ENCODE measurements at regions of chr2 and their contacts with region 1.

Region 1: DNA sequence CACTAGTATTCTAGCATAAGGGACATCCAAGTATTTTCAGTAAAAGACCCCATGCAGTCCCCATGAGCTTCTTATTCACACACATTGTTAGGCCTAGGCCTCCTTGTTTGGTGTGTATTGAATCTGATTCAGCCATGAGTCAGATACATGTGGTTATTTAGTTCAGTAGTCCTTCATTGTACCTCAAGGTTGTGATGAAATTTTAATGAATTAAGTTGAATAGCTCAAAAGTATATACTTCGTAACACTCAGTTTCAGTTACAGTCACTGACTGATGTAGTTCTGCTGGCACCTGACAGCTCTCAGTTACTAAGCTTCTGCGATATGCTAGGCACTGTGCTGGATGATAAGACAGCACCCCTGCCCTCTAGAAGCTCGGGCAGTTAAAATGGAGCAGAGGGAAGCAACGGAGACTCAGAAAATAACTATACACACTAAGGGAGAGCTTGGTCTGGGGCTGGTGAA is 86.4 kb downstream of the XRCC5 start:
- DNase-seq: no peak
- ATAC-seq: peak; percentile 49
- H3K4me3 ChIP-seq: no peak overlapping the region
- H3K27ac ChIP-seq: no peak overlapping the region
- H3K4me1 ChIP-seq: peaks cover 9% of the 10 kb centered on the region; the same call in 1 of the 2 replicates
- H3K27me3 ChIP-seq: no peaks in the 10 kb centered on the region
- CTCF ChIP-seq: no peak
- EP300 ChIP-seq: no peak
- POLR2A ChIP-seq: no peak
- RAD21 ChIP-seq: no peak

Region 2: GRCh38 chr2:216183462-216183861 is 12.1 kb before region 1 on chr2:
- CTCF ChIA-PET with region 1: interaction called, 6 read pairs
- POLR2A ChIA-PET with region 1: interaction called, 4 read pairs
- RAD21 ChIA-PET with region 1: interaction called, 5 read pairs
- SMC1A ChIA-PET with region 1: interaction called, 10 read pairs
- in situ Hi-C with region 1: no loop called
- intact Hi-C with region 1: no loop called
- DNase-seq: no peak
- ATAC-seq: peak; percentile 76
- H3K4me3 ChIP-seq: no peak overlapping the region
- H3K27ac ChIP-seq: peak overlapping the region; percentile 35; the same call in 1 of the 2 replicates
- H3K4me1 ChIP-seq: peaks cover 4% of the 10 kb centered on the region; the same call in 1 of the 2 replicates
- H3K27me3 ChIP-seq: no peaks in the 10 kb centered on the region
- CTCF ChIP-seq: no peak
- EP300 ChIP-seq: no peak
- POLR2A ChIP-seq: no peak
- RAD21 ChIP-seq: no peak

Region 3: GRCh38 chr2:216215658-216216390 is 20.2 kb after region 1 on chr2:
- CTCF ChIA-PET with region 1: interaction called, 4 read pairs
- POLR2A ChIA-PET with region 1: interaction called, 4 read pairs
- RAD21 ChIA-PET with region 1: no interaction called
- SMC1A ChIA-PET with region 1: interaction called, 14 read pairs
- in situ Hi-C with region 1: no loop called
- intact Hi-C with region 1: no loop called
- DNase-seq: no peak
- ATAC-seq: peak; percentile 60
- H3K4me3 ChIP-seq: no peak overlapping the region
- H3K27ac ChIP-seq: peak overlapping the region; percentile 24; the same call in 1 of the 2 replicates
- H3K4me1 ChIP-seq: peaks cover 26% of the 10 kb centered on the region
- H3K27me3 ChIP-seq: no peaks in the 10 kb centered on the region
- CTCF ChIP-seq: peak; percentile 26 to 46 (median 37); a peak in 4 of 6 replicates
- EP300 ChIP-seq: no peak
- POLR2A ChIP-seq: no peak
- RAD21 ChIP-seq: peak; percentile 31; the same call in 1 of the 2 replicates

Region 4: DNA sequence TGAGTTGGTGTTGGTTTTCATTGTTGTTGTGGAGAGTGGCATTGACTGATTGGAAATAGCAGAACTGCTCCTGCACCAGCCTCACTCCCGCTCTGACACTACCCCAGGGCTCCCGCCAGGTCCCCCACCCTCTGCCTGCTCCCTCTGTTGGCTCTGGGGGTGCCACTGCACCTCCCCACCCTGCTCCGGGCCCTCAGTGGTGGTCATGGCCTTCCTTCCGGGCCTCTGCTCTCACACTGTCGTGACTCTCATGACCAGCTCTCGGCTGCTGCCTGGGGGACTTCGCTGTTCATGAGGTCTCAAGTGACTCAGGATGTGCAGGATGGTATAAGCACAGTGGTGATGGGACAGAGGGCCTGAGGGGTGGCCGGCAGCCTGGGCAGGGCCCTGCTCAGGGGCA is 63.5 kb after region 1 on chr2:
- CTCF ChIA-PET with region 1: no interaction called
- POLR2A ChIA-PET with region 1: no interaction called
- RAD21 ChIA-PET with region 1: no interaction called
- SMC1A ChIA-PET with region 1: no interaction called
- in situ Hi-C with region 1: no loop called
- intact Hi-C with region 1: no loop called
- DNase-seq: no peak
- ATAC-seq: no peak
- H3K4me3 ChIP-seq: no peak overlapping the region
- H3K27ac ChIP-seq: no peak overlapping the region
- H3K4me1 ChIP-seq: no peaks in the 10 kb centered on the region
- H3K27me3 ChIP-seq: no peaks in the 10 kb centered on the region
- CTCF ChIP-seq: no peak
- EP300 ChIP-seq: no peak
- POLR2A ChIP-seq: no peak
- RAD21 ChIP-seq: no peak

Region 5: GRCh38 chr2:216491793-216492596 is 296.4 kb after region 1 on chr2:
- CTCF ChIA-PET with region 1: no interaction called
- POLR2A ChIA-PET with region 1: interaction called, 11 read pairs
- RAD21 ChIA-PET with region 1: no interaction called
- SMC1A ChIA-PET with region 1: interaction called, 3 read pairs
- in situ Hi-C with region 1: no loop called
- intact Hi-C with region 1: no loop called
- DNase-seq: peak; percentile 61
- ATAC-seq: peak; percentile 90
- H3K4me3 ChIP-seq: no peak overlapping the region
- H3K27ac ChIP-seq: peak overlapping the region; percentile 82
- H3K4me1 ChIP-seq: peaks cover 36% of the 10 kb centered on the region
- H3K27me3 ChIP-seq: no peaks in the 10 kb centered on the region
- CTCF ChIP-seq: no peak
- EP300 ChIP-seq: no peak
- POLR2A ChIP-seq: peak; percentile 41
- RAD21 ChIP-seq: no peak